GM13977 (cell line): ENCODE measurements at regions of chr16 and their contacts with region 1.

Region 1: DNA sequence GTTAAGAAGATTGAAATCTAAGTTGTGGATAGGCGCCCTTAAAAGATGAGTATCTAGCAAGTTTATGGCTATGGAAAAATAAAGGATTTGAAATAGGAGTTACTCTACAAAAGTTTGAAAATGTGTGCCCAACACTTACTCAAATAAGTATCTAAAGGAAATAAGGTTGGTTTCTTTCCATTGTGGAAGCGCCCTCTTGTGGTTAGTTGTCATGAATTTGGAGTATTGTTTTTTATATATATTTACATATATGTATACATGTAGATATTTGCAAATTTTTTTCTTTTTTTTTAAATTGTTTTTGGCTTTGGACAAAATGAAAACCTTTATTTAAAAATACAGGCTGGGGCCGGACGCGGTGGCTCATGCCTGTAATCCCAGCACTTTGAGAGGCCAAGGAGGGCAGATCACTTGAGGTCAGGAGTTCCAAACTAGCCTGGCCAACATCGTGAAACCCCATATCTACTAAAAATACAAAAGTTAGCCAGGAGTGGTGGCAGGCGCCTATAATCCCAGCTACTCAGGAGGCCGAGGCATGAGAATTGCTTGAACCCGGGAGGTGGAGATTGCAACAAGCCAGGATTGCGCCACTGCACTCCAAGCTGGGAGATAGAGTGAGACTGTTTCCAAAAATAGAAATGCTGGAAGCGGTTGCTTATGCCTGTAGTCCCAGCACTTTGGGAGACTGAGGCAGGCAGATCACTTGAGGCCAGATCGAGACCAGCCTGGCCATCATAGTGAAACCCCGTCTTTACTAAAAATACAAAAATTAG is 24.0 kb upstream of the VPS4A start:
- DNase-seq: peak; percentile 51
- CTCF ChIP-seq: peak; percentile 39

Region 2: DNA sequence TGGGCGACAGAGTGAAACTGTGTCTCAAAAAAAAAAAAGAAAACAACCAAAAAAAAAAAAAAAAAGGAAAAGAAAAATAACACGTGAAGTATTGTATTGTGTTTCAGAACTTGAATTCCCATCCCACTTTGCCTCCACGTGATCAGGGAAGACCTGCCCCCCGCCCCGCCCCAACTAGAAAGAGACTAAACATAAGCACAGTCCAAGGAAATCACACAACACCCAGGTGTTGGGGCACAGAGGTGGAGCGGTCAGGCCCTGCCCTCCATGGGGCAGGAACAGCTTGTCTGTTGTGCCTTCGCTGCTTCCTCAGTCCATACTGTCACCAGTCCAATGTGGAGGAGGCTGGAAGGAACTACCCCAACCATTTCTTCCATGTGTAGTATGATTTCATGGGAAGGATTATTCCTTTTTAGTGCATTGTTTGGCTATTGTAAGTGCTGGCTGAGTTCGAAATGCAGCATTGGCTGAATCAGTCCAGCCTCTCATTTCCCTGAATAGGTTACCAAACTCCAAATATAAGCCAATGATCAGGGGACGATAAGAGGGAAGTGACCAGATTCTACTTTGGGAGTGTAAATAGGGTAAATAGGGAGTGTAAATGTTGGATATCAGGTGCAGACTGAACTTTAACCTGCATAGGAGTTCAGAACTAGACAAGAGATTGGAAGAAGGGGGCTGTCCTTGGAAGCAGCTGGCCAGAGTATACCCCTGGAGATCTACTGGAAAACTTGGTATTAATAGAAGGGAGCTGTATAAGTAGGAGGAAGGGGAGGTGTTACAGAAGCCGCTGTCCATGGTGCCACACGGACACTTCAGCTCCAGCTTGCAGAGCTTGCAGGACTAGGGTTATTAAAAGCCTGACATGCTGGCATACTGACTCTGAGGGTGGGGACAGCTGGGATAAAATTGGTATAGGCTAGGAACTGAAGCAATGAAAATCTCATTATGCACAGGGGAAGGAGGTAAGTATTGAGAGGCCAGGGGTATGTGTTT is 393.1 kb before region 1 on chr16:
- in situ Hi-C with region 1: loop called (anchors 25 kb)
- DNase-seq: no peak
- CTCF ChIP-seq: no peak

Region 3: GRCh38 chr16:69150146-69150865 is 136.8 kb before region 1 on chr16:
- in situ Hi-C with region 1: loop called (anchors 10 kb)
- DNase-seq: peak; percentile 70
- CTCF ChIP-seq: peak; percentile 79